Activated CD4-positive, alpha-beta memory T cell treated with anti-CD3 and anti-CD28 coated beads for 36 hours (primary cell): ENCODE measurements at regions of chr1 and their contacts with region 1.

Region 1: GRCh38 chr1:24391882-24392603 is 21.5 kb downstream of the STPG1 start:
- DNase-seq: peak; percentile 79
- H3K4me3 Mint-ChIP-seq: peak overlapping the region; percentile 68
- H3K27ac Mint-ChIP-seq: peak overlapping the region; percentile 82
- H3K4me1 Mint-ChIP-seq: peaks cover 27% of the 10 kb centered on the region
- H3K27me3 Mint-ChIP-seq: no peaks in the 10 kb centered on the region

Region 2: GRCh38 chr1:24150234-24151174 is 241.5 kb before region 1 on chr1:
- CTCF ChIA-PET with region 1: interaction called, 77 read pairs
- POLR2A ChIA-PET with region 1: no interaction called
- intact Hi-C with region 1: loop called (anchors 1 kb)
- DNase-seq: peak; percentile 93
- H3K4me3 Mint-ChIP-seq: peak overlapping the region; percentile 63
- H3K27ac Mint-ChIP-seq: no peak overlapping the region
- H3K4me1 Mint-ChIP-seq: peaks cover 17% of the 10 kb centered on the region
- H3K27me3 Mint-ChIP-seq: peaks cover 16% of the 10 kb centered on the region

Region 3: DNA sequence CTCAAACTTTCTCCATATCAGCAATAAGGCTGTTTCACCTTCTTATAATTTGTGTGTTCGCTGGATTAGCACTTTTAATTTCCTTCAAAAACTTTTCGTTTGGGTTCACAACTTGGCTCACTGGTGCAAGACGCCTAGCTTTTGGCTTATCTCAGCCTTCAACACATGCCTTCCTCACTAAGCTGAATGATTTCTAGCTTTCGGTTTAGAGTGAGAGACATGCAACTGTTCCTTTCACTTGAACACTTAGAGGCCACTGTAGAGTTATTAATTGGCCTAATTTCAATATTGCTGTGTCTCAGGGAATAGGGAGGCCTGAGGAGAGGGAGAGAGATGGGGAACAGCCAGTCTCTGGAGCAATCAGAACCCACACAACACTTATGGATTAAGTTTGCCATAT is 163.7 kb before region 1 on chr1:
- CTCF ChIA-PET with region 1: interaction called, 18 read pairs
- POLR2A ChIA-PET with region 1: no interaction called
- intact Hi-C with region 1: no loop called
- DNase-seq: no peak
- H3K4me3 Mint-ChIP-seq: no peak overlapping the region
- H3K27ac Mint-ChIP-seq: no peak overlapping the region
- H3K4me1 Mint-ChIP-seq: peaks cover 14% of the 10 kb centered on the region
- H3K27me3 Mint-ChIP-seq: peaks cover 6% of the 10 kb centered on the region

Region 4: GRCh38 chr1:24321697-24322469 is 70.2 kb before region 1 on chr1:
- CTCF ChIA-PET with region 1: interaction called, 64 read pairs
- POLR2A ChIA-PET with region 1: interaction called, 3 read pairs
- intact Hi-C with region 1: loop called (anchors 2 kb)
- DNase-seq: peak; percentile 86
- H3K4me3 Mint-ChIP-seq: peak overlapping the region; percentile 71
- H3K27ac Mint-ChIP-seq: no peak overlapping the region
- H3K4me1 Mint-ChIP-seq: peaks cover 37% of the 10 kb centered on the region
- H3K27me3 Mint-ChIP-seq: peaks cover 69% of the 10 kb centered on the region

Region 5: DNA sequence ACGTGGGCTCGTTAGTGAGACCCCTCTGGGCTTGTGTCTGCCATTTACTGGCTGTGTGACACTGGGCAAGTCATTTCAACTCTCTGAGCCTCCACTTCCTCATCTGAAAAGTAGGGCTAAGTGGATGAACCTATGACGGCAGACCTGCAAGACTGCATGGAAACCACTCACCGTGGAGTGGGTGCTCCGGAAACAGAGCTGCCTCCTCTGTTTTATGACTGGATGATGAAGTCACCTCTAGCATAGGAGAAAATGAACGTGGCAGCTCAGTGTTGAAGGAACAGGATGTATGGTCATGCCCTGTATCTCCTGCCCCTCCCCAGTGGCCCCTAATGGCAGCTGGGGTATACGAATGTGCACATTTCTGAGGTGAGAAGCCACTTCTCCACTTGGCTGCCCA is 19.0 kb before region 1 on chr1:
- CTCF ChIA-PET with region 1: interaction called, 30 read pairs
- POLR2A ChIA-PET with region 1: interaction called, 3 read pairs
- intact Hi-C with region 1: no loop called
- DNase-seq: peak; percentile 25
- H3K4me3 Mint-ChIP-seq: no peak overlapping the region
- H3K27ac Mint-ChIP-seq: no peak overlapping the region
- H3K4me1 Mint-ChIP-seq: no peaks in the 10 kb centered on the region
- H3K27me3 Mint-ChIP-seq: no peaks in the 10 kb centered on the region

Region 6: DNA sequence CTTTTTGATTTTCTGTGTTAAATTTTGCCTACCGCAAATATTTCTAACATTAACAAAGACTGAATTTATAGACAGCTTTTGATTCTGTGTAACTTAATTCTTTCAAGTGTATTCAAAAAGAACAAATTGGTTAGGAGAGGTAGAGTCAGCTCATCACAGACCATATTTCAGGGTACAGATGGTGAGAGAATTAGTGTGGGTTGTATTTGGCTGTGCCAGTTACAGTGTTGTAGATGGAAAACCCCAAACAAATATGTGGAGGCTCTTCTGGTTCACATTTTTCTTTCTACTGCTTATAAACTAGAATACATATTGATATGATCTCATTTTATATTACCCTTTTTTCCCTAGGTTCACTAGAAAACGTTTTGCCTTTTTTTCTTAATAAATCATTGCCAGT is 121.7 kb after region 1 on chr1:
- CTCF ChIA-PET with region 1: no interaction called
- POLR2A ChIA-PET with region 1: no interaction called
- intact Hi-C with region 1: no loop called
- DNase-seq: no peak
- H3K4me3 Mint-ChIP-seq: no peak overlapping the region
- H3K27ac Mint-ChIP-seq: no peak overlapping the region
- H3K4me1 Mint-ChIP-seq: peaks cover 71% of the 10 kb centered on the region
- H3K27me3 Mint-ChIP-seq: no peaks in the 10 kb centered on the region

Region 7: DNA sequence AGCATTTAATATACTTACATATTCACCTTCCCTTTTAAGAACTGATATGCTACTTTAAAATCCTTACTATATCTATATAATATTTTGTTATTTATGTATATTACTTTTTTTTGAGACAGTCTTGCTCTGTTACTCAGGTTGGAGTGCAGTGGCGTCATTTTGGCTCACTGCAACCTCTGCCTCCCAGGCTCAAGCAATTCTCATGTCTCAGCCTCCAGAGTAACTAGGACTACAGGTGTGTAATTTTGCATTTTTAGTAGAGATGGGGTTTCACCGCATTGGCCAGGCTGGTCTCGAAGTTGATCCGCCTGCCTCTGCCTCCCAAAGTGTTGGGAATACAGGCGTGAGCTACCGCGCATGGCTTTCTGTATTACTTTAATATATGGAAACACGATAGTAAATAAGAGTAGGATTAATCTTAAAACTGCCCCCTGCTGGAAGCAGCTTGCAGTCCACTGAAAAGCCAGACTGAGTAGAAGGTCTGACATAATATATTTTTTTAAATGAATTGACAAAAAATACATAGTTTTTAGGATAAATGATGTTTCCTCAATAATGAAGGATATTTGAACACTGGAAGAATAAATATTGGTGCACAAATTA is 135.0 kb after region 1 on chr1:
- CTCF ChIA-PET with region 1: interaction called, 16 read pairs
- POLR2A ChIA-PET with region 1: no interaction called
- intact Hi-C with region 1: no loop called
- DNase-seq: peak; percentile 58
- H3K4me3 Mint-ChIP-seq: no peak overlapping the region
- H3K27ac Mint-ChIP-seq: no peak overlapping the region
- H3K4me1 Mint-ChIP-seq: peaks cover 57% of the 10 kb centered on the region
- H3K27me3 Mint-ChIP-seq: no peaks in the 10 kb centered on the region

Region 8: GRCh38 chr1:24769656-24770651 is 377.9 kb after region 1 on chr1:
- CTCF ChIA-PET with region 1: no interaction called
- POLR2A ChIA-PET with region 1: no interaction called
- intact Hi-C with region 1: no loop called
- DNase-seq: no peak
- H3K4me3 Mint-ChIP-seq: no peak overlapping the region
- H3K27ac Mint-ChIP-seq: no peak overlapping the region
- H3K4me1 Mint-ChIP-seq: peaks cover 4% of the 10 kb centered on the region
- H3K27me3 Mint-ChIP-seq: no peaks in the 10 kb centered on the region